ENCODE measurements at regions of chr13 and their contacts with region 1.

Region 1: DNA sequence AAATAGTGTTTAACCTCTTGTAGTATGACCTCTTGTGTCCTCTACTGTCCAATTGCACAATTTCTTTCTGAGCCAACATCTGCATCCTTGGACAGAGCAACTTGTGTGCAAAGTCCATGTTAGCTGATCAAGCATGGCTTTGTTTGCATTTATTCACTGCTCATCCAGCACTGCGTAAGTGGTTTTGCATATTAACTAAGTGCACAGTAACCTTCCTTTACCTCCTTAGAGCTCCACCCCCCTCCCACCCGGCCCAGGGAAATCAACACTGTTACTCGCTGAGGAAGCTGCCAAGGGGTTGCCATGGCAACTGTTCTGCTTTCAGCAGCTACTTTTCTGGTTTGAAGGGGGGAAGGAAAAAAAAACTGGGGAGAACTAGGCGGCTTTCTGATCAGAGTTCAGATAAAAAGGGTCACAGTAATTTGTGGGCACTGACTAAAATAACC is 153.5 kb upstream of the KLF12 start:
- DNase-seq: peak; percentile 91
- H3K4me3 Mint-ChIP-seq: peak overlapping the region; percentile 71
- H3K27ac Mint-ChIP-seq: peak overlapping the region; percentile 82
- H3K4me1 Mint-ChIP-seq: peaks cover 41% of the 10 kb centered on the region
- H3K27me3 Mint-ChIP-seq: no peaks in the 10 kb centered on the region

Region 2: GRCh38 chr13:73722120-73722519 is 565.6 kb before region 1 on chr13:
- intact Hi-C with region 1: loop called (anchors 2 kb)
- DNase-seq: no peak
- H3K4me3 Mint-ChIP-seq: no peak overlapping the region
- H3K27ac Mint-ChIP-seq: no peak overlapping the region
- H3K4me1 Mint-ChIP-seq: peaks cover 17% of the 10 kb centered on the region
- H3K27me3 Mint-ChIP-seq: no peaks in the 10 kb centered on the region

Region 3: GRCh38 chr13:73835138-73835721 is 452.5 kb before region 1 on chr13:
- intact Hi-C with region 1: loop called (anchors 1 kb)
- DNase-seq: no peak
- H3K4me3 Mint-ChIP-seq: no peak overlapping the region
- H3K27ac Mint-ChIP-seq: no peak overlapping the region
- H3K4me1 Mint-ChIP-seq: peaks cover 5% of the 10 kb centered on the region
- H3K27me3 Mint-ChIP-seq: no peaks in the 10 kb centered on the region

Region 4: GRCh38 chr13:73984949-73985691 is 302.6 kb before region 1 on chr13:
- intact Hi-C with region 1: loop called (anchors 1 kb)
- DNase-seq: peak; percentile 88
- H3K4me3 Mint-ChIP-seq: peak overlapping the region; percentile 75
- H3K27ac Mint-ChIP-seq: peak overlapping the region; percentile 87
- H3K4me1 Mint-ChIP-seq: peaks cover 34% of the 10 kb centered on the region
- H3K27me3 Mint-ChIP-seq: no peaks in the 10 kb centered on the region

Region 5: DNA sequence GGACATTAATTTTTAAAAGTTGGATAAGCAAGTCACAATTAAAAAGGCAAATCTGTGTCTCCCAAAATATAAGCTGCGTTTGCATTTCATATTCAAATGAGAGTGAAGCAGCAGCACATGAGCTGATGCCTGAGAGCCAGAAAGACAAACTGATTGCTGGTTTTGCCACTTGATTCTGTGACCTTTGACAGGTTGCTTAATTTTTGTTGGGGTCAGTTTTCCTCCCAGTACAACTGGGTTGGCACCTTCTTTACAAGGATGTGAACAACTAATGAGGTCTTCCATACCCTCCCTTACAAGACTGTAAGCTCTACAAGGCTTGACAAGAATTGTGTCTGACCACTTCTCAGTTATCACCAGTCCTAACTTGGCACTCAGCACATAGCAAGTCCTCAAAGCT is 145.5 kb before region 1 on chr13:
- intact Hi-C with region 1: no loop called
- DNase-seq: no peak
- H3K4me3 Mint-ChIP-seq: no peak overlapping the region
- H3K27ac Mint-ChIP-seq: no peak overlapping the region
- H3K4me1 Mint-ChIP-seq: no peaks in the 10 kb centered on the region
- H3K27me3 Mint-ChIP-seq: peaks cover 21% of the 10 kb centered on the region

Region 6: DNA sequence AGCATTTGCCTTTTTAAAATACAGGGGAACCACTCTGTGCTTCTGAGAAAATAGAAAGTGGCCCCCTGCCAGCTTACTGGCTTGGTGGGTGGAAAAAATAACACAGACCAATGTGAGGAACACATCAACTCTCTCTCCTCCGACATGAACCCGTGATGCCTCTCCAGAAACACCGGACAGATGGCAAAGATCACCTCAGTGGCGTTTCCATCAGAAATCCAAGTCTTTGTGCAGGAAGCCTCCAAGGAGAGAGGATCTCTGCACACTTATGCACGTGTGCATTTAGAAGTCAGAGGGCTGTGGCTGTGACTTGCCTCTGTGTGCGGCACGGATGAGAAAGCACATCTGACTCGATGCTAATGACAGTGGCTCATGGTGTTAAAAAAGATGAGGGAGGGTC is 41.3 kb before region 1 on chr13:
- intact Hi-C with region 1: loop called (anchors 1 kb)
- DNase-seq: no peak
- H3K4me3 Mint-ChIP-seq: no peak overlapping the region
- H3K27ac Mint-ChIP-seq: no peak overlapping the region
- H3K4me1 Mint-ChIP-seq: peaks cover 54% of the 10 kb centered on the region
- H3K27me3 Mint-ChIP-seq: peaks cover 1% of the 10 kb centered on the region

Region 7: GRCh38 chr13:74530011-74530410 is 242.3 kb after region 1 on chr13:
- intact Hi-C with region 1: no loop called
- DNase-seq: no peak
- H3K4me3 Mint-ChIP-seq: no peak overlapping the region
- H3K27ac Mint-ChIP-seq: no peak overlapping the region
- H3K4me1 Mint-ChIP-seq: no peaks in the 10 kb centered on the region
- H3K27me3 Mint-ChIP-seq: no peaks in the 10 kb centered on the region

Measured in activated CD4-positive, alpha-beta T cell treated with anti-CD3 and anti-CD28 coated beads, Interleukin-2, amount 10 ng/mL, durations not matched to agents 24 days and 14 days (primary cell).